ENCODE measurements at regions of chr5 and their contacts with region 1.

Region 1: DNA sequence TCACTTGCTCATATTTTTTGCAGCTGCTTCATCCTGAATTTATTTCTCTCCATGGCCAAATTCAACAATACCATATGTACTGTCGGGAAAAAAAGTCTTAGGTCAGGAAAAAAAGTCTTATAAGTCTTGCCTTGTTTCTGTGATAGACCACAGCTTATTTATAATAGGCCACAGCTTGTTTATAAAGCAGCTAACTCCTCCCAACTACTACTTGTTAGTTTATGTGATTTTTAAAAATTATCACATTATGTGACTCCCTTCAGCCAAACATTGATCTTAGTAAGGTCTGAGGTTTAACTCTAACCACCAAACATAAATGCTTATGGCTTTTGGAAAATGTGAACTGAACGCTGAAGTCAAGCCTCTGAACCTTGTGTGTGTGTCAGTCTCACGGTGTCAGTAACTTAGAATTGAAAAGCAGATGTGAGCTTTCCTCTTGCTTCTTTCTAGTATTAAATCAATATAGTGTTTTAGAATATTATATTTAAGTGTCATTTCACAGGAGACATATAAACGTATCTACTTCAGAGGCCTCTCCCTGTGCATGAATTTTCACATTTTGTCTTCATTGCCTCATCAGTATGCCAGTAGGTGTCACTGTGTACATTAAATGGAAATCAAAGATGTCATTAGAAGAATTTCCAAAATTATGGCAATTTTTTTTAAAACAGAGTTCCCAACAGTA is 51.3 kb downstream of the SNX24 start:
- DNase-seq: peak; percentile 57
- H3K4me3 ChIP-seq: no peak overlapping the region
- H3K27ac ChIP-seq: no peak overlapping the region
- H3K4me1 ChIP-seq: peaks cover 8% of the 10 kb centered on the region
- H3K27me3 ChIP-seq: no peaks in the 10 kb centered on the region

Region 2: GRCh38 chr5:122805481-122805880 is 91.3 kb before region 1 on chr5:
- in situ Hi-C with region 1: no loop called
- DNase-seq: peak; percentile 58
- H3K4me3 ChIP-seq: no peak overlapping the region
- H3K27ac ChIP-seq: no peak overlapping the region
- H3K4me1 ChIP-seq: no peaks in the 10 kb centered on the region
- H3K27me3 ChIP-seq: no peaks in the 10 kb centered on the region

Region 3: GRCh38 chr5:123164054-123164453 is 267.3 kb after region 1 on chr5:
- in situ Hi-C with region 1: loop called (anchors 10 kb)
- DNase-seq: peak; percentile 23
- H3K4me3 ChIP-seq: no peak overlapping the region
- H3K27ac ChIP-seq: no peak overlapping the region
- H3K4me1 ChIP-seq: no peaks in the 10 kb centered on the region
- H3K27me3 ChIP-seq: peaks cover 21% of the 10 kb centered on the region; the same call in 1 of the 2 replicates

Region 4: DNA sequence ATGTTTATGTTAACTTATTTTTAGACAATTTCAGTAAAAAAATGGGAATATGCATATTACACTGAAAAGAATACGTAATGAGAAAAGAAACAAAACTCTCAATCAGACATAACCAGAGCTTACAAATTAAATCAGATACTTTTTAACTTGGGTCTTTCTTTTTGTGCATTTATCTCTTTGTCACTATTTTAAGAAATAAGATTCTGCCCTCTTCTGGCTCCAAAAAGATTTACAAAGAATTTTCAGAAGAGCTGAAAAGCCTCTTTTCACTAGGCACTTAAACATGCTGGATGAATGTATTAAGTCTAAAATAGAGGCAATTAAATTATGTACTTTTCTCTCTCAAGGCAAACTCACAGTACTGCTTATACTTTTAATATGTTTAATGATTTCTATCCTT is 471.0 kb after region 1 on chr5:
- in situ Hi-C with region 1: loop called (anchors 10 kb)
- DNase-seq: peak; percentile 44
- H3K4me3 ChIP-seq: no peak overlapping the region
- H3K27ac ChIP-seq: no peak overlapping the region
- H3K4me1 ChIP-seq: peaks cover 9% of the 10 kb centered on the region; the same call in 1 of the 2 replicates
- H3K27me3 ChIP-seq: no peaks in the 10 kb centered on the region

Measured in GM23248 (cell line).